ENCODE measurements at regions of chr7 and their contacts with region 1.

Region 1: DNA sequence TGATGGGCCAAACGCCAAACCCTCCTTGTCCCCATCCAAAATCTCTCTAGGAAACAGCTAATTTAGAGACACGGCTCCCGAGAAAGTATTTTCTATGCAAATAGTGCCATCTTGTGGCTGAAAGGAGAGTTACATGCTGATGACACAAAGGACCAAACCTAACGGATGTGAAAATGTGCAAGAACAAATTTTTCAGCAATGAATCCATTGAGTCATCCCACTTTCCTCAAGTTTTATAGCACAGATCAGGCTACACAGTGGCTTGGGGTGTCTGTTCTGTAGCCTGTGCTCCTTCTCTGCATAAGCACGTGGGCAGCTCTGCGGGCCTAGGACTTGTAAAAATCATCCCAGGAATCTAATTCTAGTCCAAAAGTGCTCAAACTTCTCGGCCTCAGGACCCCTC is 154.8 kb upstream of the PRR15 start:
- DNase-seq: peak; percentile 62
- ATAC-seq: peak; percentile 67
- H3K4me3 Mint-ChIP-seq: no peak overlapping the region
- H3K27ac Mint-ChIP-seq: no peak overlapping the region
- H3K4me1 Mint-ChIP-seq: no peaks in the 10 kb centered on the region
- H3K27me3 Mint-ChIP-seq: no peaks in the 10 kb centered on the region
- CTCF ChIP-seq: peak; percentile 83

Region 2: GRCh38 chr7:28955718-28956619 is 452.9 kb before region 1 on chr7:
- CTCF ChIA-PET with region 1: interaction called, 14 read pairs
- POLR2A ChIA-PET with region 1: no interaction called
- intact Hi-C with region 1: no loop called
- DNase-seq: peak; percentile 49
- ATAC-seq: peak; percentile 45
- H3K4me3 Mint-ChIP-seq: no peak overlapping the region
- H3K27ac Mint-ChIP-seq: no peak overlapping the region
- H3K4me1 Mint-ChIP-seq: peaks cover 9% of the 10 kb centered on the region
- H3K27me3 Mint-ChIP-seq: peaks cover 58% of the 10 kb centered on the region
- CTCF ChIP-seq: peak; percentile 44

Region 3: GRCh38 chr7:29105752-29106668 is 302.8 kb before region 1 on chr7:
- CTCF ChIA-PET with region 1: interaction called, 14 read pairs
- POLR2A ChIA-PET with region 1: no interaction called
- intact Hi-C with region 1: loop called (anchors 5 kb)
- DNase-seq: peak; percentile 22
- ATAC-seq: peak; percentile 82
- H3K4me3 Mint-ChIP-seq: no peak overlapping the region
- H3K27ac Mint-ChIP-seq: no peak overlapping the region
- H3K4me1 Mint-ChIP-seq: no peaks in the 10 kb centered on the region
- H3K27me3 Mint-ChIP-seq: no peaks in the 10 kb centered on the region
- CTCF ChIP-seq: peak; percentile 70

Region 4: GRCh38 chr7:29113384-29114103 is 295.3 kb before region 1 on chr7:
- CTCF ChIA-PET with region 1: interaction called, 11 read pairs
- POLR2A ChIA-PET with region 1: no interaction called
- intact Hi-C with region 1: loop called (anchors 5 kb)
- DNase-seq: peak; percentile 16
- ATAC-seq: peak; percentile 49
- H3K4me3 Mint-ChIP-seq: no peak overlapping the region
- H3K27ac Mint-ChIP-seq: no peak overlapping the region
- H3K4me1 Mint-ChIP-seq: peaks cover 11% of the 10 kb centered on the region
- H3K27me3 Mint-ChIP-seq: peaks cover 9% of the 10 kb centered on the region
- CTCF ChIP-seq: no peak

Region 5: GRCh38 chr7:29156907-29157452 is 251.9 kb before region 1 on chr7:
- CTCF ChIA-PET with region 1: interaction called, 12 read pairs
- POLR2A ChIA-PET with region 1: no interaction called
- intact Hi-C with region 1: no loop called
- DNase-seq: peak; percentile 6
- ATAC-seq: peak; percentile 24
- H3K4me3 Mint-ChIP-seq: peak overlapping the region; percentile 9
- H3K27ac Mint-ChIP-seq: no peak overlapping the region
- H3K4me1 Mint-ChIP-seq: peaks cover 10% of the 10 kb centered on the region
- H3K27me3 Mint-ChIP-seq: peaks cover 7% of the 10 kb centered on the region
- CTCF ChIP-seq: peak; percentile 11

Region 6: DNA sequence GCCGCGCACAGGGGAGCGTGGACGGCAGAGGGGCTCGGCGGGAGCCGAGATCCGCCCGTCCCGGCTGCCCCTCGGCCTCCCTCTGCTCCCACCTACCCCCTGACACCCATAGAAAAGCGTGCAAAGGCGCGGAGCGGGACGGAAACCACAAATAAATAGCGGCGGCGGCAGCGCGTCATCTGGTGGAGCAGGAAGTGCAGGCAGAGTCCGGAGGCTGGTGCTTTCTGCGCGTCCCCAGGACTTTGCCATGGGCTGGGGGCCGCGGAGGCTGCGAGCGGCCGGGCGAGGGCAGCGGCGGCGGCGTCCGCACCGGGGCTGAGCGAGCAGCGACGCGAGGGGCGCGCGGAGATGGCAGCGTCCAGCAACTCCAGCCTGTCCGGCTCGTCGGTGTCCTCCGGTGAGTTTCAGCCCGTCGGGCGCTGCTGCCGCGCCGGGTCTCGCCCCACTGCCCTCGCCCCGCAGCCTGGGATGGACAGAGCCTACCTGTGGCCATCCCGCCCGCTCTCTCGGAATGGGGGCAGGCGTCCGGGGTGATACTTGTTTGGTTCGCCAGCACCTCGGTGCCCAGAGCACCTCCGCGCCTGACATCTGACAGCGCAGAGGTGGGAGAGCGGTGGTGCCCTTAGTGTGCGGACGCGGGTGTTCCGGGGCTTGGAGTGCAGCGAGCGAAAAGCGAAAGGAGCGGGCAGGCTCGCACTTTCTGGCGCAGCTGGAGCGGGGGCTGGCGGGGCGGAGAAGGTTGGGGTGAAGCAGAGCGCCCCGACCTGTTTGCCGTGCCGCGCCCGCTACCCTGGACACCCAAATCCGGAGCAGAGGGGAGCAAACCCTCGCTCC is 214.0 kb before region 1 on chr7 and contains the start of gene CHN2:
- CTCF ChIA-PET with region 1: interaction called, 83 read pairs
- POLR2A ChIA-PET with region 1: no interaction called
- intact Hi-C with region 1: loop called (anchors 2 kb)
- DNase-seq: peak; percentile 70
- ATAC-seq: peak; percentile 77
- H3K4me3 Mint-ChIP-seq: peak within 1 kb of the TSS; percentile 85
- H3K27ac Mint-ChIP-seq: peak within 1 kb of the TSS; percentile 82
- H3K4me1 Mint-ChIP-seq: peaks cover 23% of the 10 kb centered on the region
- H3K27me3 Mint-ChIP-seq: peaks cover 36% of the 10 kb centered on the region
- CTCF ChIP-seq: no peak
- total RNA-seq, gene CHN2: 1.7 to 1.8 TPM

Region 7: DNA sequence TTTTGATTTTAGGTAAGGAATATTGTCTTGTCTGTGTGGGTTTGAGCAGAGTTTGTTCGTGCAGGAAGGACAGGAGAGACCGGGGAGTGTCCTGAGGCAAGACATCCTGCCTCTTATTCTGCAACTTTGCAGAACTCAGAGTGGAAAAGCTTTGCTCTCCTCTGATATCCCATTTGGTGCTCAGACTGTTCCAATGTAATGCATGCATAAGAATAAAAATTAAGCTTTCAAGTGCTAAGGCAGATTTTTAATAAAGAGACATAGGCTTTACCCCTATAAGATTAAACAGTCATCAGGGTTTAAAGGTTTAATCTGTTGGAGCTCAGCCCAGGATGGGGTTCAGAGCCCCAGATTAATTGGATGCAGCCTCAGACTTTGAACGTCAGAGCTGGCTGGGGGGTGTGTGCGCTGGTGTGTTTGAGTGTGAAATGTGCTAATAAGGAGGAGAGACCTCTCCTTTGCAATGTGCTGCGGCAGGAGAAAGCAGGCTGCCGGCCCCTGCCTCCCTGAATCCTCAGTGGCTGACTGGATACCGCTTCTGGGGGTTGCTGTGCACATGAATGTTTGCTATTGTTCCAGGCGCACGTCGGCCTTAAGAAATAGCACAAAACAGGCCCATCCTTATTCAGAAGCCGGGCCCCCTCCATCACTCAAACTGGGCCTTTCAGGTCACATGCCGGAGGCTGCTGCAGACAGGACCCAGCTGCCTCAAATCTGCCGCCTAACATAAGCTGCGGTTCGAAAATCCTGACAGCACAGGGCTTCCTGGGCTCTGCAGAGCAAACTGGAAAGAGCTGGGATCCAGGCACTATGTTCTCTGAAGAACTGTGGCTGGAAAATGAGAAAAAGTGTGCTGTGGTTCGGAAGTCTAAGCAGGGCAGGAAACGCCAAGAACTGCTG is 70.7 kb after region 1 on chr7:
- CTCF ChIA-PET with region 1: no interaction called
- POLR2A ChIA-PET with region 1: no interaction called
- intact Hi-C with region 1: no loop called
- DNase-seq: no peak
- ATAC-seq: no peak
- H3K4me3 Mint-ChIP-seq: no peak overlapping the region
- H3K27ac Mint-ChIP-seq: no peak overlapping the region
- H3K4me1 Mint-ChIP-seq: no peaks in the 10 kb centered on the region
- H3K27me3 Mint-ChIP-seq: no peaks in the 10 kb centered on the region
- CTCF ChIP-seq: no peak

Region 8: DNA sequence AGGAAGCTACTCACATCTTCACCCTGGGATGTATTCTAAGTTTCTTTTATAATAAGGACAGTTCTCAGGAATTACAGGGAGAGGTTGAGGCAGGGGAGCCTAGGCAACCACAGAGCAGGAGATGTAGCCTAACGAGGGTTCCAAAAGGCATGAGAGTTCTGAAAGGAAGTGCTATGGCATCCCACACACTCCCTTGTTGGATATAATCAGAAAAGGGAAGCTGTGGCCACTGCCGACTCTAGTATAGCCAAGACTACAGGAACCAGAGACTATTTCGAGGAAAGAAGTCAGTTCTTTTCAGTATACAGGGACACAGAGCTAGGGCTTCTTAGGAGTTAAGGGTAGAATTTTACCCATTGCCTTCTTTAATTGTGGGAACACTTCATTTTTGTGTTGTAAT is 165.8 kb after region 1 on chr7:
- CTCF ChIA-PET with region 1: no interaction called
- POLR2A ChIA-PET with region 1: no interaction called
- intact Hi-C with region 1: no loop called
- DNase-seq: no peak
- ATAC-seq: no peak
- H3K4me3 Mint-ChIP-seq: no peak overlapping the region
- H3K27ac Mint-ChIP-seq: no peak overlapping the region
- H3K4me1 Mint-ChIP-seq: no peaks in the 10 kb centered on the region
- H3K27me3 Mint-ChIP-seq: peaks cover 20% of the 10 kb centered on the region
- CTCF ChIP-seq: no peak